ENCODE measurements at regions of chr1 and their contacts with region 1.

Region 1: GRCh38 chr1:78649628-78650027 is at the start of gene IFI44:
- DNase-seq: peak; percentile 50
- H3K4me3 Mint-ChIP-seq: peak within 1 kb of the TSS; percentile 88
- H3K27ac Mint-ChIP-seq: peak within 1 kb of the TSS; percentile 91
- H3K4me1 Mint-ChIP-seq: peaks cover 58% of the 10 kb centered on the region
- H3K27me3 Mint-ChIP-seq: no peaks in the 10 kb centered on the region
- total RNA-seq, gene IFI44: 26.9 and 28.1 TPM in 2 replicates

Region 2: GRCh38 chr1:78664763-78665162 is 15.1 kb after region 1 on chr1:
- intact Hi-C with region 1: loop called (anchors 1 kb)
- DNase-seq: no peak
- H3K4me3 Mint-ChIP-seq: no peak overlapping the region
- H3K27ac Mint-ChIP-seq: no peak overlapping the region
- H3K4me1 Mint-ChIP-seq: no peaks in the 10 kb centered on the region
- H3K27me3 Mint-ChIP-seq: no peaks in the 10 kb centered on the region

Region 3: DNA sequence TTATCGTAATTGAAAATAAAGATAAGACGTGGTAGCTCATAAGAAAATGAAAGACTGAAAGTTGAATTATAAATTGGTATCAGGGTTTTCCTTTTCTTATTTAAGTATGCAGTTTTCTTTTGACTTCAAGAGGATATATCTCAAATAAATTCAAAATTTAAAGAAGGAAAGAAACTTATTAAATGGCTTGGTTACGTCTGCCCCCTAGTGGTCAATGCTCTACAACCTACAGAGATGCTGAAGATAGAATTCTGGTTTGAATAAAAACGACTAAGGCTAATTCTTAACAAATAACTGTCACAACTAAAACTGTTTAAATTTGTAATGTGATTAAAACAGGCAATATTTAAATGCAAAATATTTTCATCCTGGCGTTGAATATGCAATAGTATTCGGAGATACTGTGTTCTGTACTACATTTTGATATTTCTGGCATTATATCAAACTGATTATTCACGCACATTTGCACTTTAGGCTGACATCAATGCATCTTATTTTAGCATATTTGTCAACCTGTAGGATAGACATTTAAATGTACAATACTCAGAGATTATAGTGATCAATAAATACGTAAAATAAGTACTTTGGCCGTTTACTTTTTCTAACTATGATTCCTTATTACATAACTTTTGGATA is 26.8 kb after region 1 on chr1:
- intact Hi-C with region 1: loop called (anchors 2 kb)
- DNase-seq: peak; percentile 25
- H3K4me3 Mint-ChIP-seq: no peak overlapping the region
- H3K27ac Mint-ChIP-seq: no peak overlapping the region
- H3K4me1 Mint-ChIP-seq: peaks cover 34% of the 10 kb centered on the region
- H3K27me3 Mint-ChIP-seq: peaks cover 8% of the 10 kb centered on the region

Region 4: DNA sequence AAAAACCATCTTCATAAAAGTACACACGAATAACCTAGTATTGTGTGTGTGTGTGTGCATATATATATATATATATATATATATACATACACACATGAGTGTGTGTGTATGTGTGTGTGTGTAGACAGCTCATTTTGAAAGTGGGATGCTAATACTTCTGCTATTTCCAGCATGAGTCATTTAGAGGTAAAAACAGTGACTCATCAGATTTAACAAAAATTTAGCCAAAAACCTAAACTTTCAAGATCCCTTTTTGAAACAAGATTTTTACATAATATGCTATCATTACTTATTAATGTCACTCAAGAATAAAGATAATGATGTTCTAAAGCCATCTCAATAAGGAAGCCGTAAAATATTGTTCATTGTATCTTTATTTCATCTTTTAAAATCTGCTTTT is 392.5 kb after region 1 on chr1:
- intact Hi-C with region 1: loop called (anchors 10 kb)
- DNase-seq: no peak
- H3K4me3 Mint-ChIP-seq: no peak overlapping the region
- H3K27ac Mint-ChIP-seq: no peak overlapping the region
- H3K4me1 Mint-ChIP-seq: peaks cover 16% of the 10 kb centered on the region
- H3K27me3 Mint-ChIP-seq: no peaks in the 10 kb centered on the region